Activated naive CD8-positive, alpha-beta T cell treated with anti-CD3 and anti-CD28 coated beads, Interleukin-2, amount 10 ng/mL, durations not matched to agents 7 days and 5 days (primary cell): ENCODE measurements at regions of chr14 and their contacts with region 1.

Region 1: GRCh38 chr14:22536853-22537338 is 52.1 kb downstream of the DAD1 start:
- DNase-seq: no peak
- ATAC-seq: peak; percentile 83
- H3K4me3 Mint-ChIP-seq: peak overlapping the region; percentile 86
- H3K27ac Mint-ChIP-seq: peak overlapping the region; percentile 99
- H3K4me1 Mint-ChIP-seq: peaks cover 91% of the 10 kb centered on the region
- H3K27me3 Mint-ChIP-seq: no peaks in the 10 kb centered on the region

Region 2: GRCh38 chr14:21997300-21997699 is 539.6 kb before region 1 on chr14:
- POLR2A ChIA-PET with region 1: interaction called, 13 read pairs
- DNase-seq: no peak
- ATAC-seq: peak; percentile 88
- H3K4me3 Mint-ChIP-seq: peak overlapping the region; percentile 96
- H3K27ac Mint-ChIP-seq: peak overlapping the region; percentile 96
- H3K4me1 Mint-ChIP-seq: peaks cover 17% of the 10 kb centered on the region
- H3K27me3 Mint-ChIP-seq: no peaks in the 10 kb centered on the region

Region 3: GRCh38 chr14:22002860-22003309 is 534.0 kb before region 1 on chr14:
- POLR2A ChIA-PET with region 1: interaction called, 11 read pairs
- DNase-seq: peak; percentile 67
- ATAC-seq: peak; percentile 66
- H3K4me3 Mint-ChIP-seq: peak overlapping the region; percentile 82
- H3K27ac Mint-ChIP-seq: peak overlapping the region; percentile 86
- H3K4me1 Mint-ChIP-seq: peaks cover 15% of the 10 kb centered on the region
- H3K27me3 Mint-ChIP-seq: no peaks in the 10 kb centered on the region

Region 4: DNA sequence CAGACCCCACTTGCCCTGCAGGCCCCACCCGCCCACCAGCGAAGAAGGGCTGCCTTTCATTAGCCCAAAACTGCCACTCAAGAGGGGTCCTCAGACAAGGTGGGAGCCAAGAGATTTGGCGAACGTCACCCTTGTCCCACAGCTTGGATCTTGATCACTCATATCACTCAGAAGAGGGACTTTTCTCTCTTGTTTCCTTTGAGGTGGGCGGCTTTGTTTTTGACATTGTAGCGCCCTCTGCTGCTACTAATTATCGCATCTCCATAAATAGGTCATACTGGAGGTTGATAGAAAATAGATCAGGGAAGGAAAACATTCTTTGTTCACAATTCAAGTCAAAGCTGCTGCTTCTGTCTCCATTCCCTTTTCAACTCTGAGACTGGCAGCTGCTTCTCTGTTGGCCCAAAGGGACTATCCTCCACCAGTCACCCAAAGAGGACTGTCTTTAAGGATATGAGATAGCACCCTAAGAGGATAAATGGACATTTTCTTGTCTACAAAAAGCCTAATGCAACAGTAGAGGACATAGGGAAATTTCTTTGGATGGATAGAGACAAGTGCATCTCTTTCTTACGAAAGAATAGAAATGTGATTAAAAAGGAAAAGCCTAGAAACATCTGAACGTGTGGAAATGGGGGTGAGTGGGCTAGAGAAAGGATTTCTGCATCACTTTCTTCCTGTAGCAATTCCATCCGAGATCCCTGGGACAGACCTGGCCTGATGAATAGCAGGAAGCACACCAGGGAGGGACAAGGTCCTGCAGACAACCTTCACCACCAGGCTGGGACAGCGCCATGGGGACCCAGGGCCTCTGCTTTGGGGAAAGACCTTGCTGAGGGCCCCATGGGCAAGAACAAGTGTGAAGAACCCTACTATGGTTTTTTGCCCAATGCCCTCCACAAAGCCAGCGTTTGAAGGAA is 63.7 kb before region 1 on chr14:
- POLR2A ChIA-PET with region 1: no interaction called
- DNase-seq: no peak
- ATAC-seq: no peak
- H3K4me3 Mint-ChIP-seq: no peak overlapping the region
- H3K27ac Mint-ChIP-seq: no peak overlapping the region
- H3K4me1 Mint-ChIP-seq: no peaks in the 10 kb centered on the region
- H3K27me3 Mint-ChIP-seq: no peaks in the 10 kb centered on the region

Region 5: GRCh38 chr14:22505697-22506377 is 31.1 kb before region 1 on chr14:
- POLR2A ChIA-PET with region 1: interaction called, 652 read pairs
- DNase-seq: no peak
- ATAC-seq: peak; percentile 24
- H3K4me3 Mint-ChIP-seq: peak overlapping the region; percentile 91
- H3K27ac Mint-ChIP-seq: peak overlapping the region; percentile 96
- H3K4me1 Mint-ChIP-seq: peaks cover 44% of the 10 kb centered on the region
- H3K27me3 Mint-ChIP-seq: no peaks in the 10 kb centered on the region

Region 6: DNA sequence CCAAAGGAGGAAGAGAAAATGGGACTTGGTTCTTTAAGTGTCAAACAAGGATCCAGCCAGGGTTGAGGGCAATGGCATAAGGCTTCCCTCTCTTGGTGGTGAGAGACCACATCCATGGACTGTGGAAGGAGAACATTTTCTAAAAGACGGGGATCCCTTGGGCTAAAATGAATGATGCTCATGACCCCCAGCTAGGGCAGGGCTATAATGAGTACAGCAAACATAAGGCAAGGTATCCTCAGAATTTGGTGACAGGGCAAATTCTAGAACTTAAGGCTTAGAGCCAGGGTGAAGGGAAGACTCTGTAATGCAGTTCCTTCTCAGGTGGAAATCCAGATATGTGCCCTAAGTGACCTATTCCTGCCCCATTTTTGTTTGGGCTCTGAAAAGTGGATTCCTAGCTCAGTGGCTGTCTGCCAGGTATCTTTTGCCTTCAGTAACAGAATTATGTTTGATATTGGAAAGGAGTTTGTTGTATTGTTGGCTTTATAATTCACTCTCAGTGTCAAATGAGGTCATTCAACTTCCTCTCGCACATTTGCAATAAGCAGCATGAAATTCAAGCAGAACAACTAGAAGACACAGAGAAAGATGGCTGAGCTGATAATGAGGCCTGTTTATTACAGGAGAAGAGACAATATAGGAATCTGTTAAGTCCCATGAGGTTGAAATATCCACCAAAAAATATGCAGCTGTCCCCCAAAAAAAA is 24.6 kb before region 1 on chr14:
- POLR2A ChIA-PET with region 1: interaction called, 652 read pairs
- DNase-seq: no peak
- ATAC-seq: no peak
- H3K4me3 Mint-ChIP-seq: peak overlapping the region; percentile 91
- H3K27ac Mint-ChIP-seq: peak overlapping the region; percentile 96
- H3K4me1 Mint-ChIP-seq: peaks cover 64% of the 10 kb centered on the region
- H3K27me3 Mint-ChIP-seq: no peaks in the 10 kb centered on the region

Region 7: DNA sequence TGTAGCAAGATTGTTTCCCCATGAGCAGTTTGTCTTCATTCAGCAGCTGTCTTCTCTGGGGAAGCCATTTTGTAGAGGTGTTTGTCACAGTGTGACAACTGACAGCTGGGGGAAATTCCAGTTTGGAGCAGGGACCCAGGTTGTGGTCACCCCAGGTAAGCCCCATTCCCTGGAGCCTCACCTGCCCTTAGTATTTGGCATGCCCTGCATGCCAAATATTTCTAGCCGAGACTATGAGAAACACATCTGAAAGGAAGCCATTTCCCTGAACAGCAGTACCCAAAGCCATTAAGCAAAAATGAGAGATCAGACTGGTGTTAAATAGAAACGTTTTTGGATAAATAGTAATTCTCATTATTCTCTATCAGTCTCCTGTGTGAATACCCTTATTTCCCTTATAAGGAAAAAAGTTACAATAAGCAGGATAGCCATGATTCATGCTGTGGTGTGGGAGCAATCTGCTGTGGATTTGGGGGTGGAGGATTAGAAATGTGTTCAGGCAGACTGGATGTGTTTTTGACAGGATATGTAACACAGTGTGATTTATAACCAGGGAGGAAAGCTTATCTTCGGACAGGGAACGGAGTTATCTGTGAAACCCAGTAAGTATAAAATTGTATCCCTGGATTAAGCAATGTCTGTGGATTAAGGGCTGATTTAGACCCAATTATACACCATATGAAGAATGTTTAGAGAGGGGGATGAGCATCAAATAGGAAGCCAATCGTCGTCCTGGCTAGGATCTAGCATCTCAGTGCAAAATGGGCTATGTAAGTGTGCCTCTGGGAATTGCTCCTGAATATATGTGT is 16.8 kb before region 1 on chr14:
- POLR2A ChIA-PET with region 1: interaction called, 652 read pairs
- DNase-seq: no peak
- ATAC-seq: no peak
- H3K4me3 Mint-ChIP-seq: peak overlapping the region; percentile 99
- H3K27ac Mint-ChIP-seq: peak overlapping the region; percentile 98
- H3K4me1 Mint-ChIP-seq: peaks cover 74% of the 10 kb centered on the region
- H3K27me3 Mint-ChIP-seq: no peaks in the 10 kb centered on the region

Region 8: DNA sequence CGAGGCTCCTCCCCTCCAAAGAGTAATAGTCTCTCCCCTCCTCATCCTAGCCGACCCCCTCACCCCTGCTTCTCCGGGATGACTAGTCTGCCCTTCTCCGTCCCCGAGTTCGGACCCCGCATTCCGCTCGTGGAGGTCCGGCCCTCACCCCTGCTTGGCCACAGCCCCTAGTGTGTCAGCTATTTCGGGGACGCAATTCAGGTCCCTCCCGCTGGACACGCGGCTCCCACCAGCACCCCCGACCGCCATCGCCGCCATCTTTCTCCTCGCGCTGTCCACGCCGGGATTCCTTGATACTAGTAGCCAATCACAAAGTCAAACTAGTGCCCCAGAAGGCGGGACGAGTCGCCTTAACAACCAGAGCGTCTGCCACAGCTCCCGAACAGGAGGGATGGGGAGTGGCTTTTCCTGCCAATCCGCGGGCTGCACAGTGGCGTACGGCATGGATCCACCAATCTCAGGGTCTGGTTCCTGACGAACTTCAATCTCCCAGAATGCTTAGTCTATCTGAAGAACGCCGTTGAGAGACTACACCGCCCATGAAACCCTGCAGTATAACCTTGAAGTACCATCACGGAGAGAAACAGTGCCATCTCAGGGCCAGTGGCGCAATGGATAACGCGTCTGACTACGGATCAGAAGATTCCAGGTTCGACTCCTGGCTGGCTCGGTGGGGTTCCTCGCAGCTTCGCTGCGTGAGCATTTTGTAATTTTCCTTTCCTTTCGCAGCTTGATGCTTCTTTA is 392.4 kb after region 1 on chr14 and contains the start of gene PRMT5:
- POLR2A ChIA-PET with region 1: no interaction called
- DNase-seq: peak; percentile 88
- ATAC-seq: peak; percentile 98
- H3K4me3 Mint-ChIP-seq: no peak within 1 kb of the TSS
- H3K27ac Mint-ChIP-seq: no peak within 1 kb of the TSS
- H3K4me1 Mint-ChIP-seq: peaks cover 25% of the 10 kb centered on the region
- H3K27me3 Mint-ChIP-seq: no peaks in the 10 kb centered on the region
- total RNA-seq, gene PRMT5: 35.7 to 40.1 TPM